OCI-LY7 (cell line): ENCODE measurements at regions of chr19 and their contacts with region 1.

Region 1: DNA sequence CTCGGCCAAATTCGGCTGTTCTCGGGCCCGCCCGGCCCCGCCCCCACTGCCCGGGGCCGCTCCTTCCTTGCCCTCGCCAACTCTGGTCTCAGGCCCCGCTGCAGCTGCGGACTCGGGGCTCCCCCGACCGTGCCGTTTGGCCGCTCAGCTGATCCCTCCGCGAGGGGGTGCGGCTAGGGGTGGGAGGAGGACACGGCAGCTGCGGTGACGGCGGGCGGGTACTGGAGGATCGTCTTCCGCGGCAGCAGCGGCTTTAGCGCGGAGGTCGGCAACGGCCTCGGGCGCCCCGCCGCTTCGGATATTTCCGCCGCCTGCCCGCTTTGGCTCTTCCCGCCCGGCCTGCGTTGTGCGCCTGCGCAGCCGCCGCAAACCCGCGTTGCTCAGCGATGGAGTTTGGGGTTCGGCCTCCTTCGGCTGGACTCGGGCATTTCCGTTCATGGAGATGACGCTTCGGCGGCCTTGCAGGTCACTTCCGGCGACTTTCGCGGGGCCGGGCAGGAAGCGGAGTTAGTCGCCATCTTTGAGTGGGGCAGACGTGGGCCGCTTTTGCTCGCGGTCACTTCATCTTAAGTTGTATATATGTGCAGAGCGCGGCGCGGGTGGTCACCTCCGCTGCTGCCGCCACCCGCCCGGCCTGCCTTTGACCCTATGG is 338 bp upstream of the UBE2M start:
- DNase-seq: peak; percentile 99
- H3K4me3 ChIP-seq: peak overlapping the region; percentile 88
- H3K27ac ChIP-seq: peak overlapping the region; percentile 89
- H3K4me1 ChIP-seq: peaks cover 49% of the 10 kb centered on the region
- CTCF ChIP-seq: no peak

Region 2: DNA sequence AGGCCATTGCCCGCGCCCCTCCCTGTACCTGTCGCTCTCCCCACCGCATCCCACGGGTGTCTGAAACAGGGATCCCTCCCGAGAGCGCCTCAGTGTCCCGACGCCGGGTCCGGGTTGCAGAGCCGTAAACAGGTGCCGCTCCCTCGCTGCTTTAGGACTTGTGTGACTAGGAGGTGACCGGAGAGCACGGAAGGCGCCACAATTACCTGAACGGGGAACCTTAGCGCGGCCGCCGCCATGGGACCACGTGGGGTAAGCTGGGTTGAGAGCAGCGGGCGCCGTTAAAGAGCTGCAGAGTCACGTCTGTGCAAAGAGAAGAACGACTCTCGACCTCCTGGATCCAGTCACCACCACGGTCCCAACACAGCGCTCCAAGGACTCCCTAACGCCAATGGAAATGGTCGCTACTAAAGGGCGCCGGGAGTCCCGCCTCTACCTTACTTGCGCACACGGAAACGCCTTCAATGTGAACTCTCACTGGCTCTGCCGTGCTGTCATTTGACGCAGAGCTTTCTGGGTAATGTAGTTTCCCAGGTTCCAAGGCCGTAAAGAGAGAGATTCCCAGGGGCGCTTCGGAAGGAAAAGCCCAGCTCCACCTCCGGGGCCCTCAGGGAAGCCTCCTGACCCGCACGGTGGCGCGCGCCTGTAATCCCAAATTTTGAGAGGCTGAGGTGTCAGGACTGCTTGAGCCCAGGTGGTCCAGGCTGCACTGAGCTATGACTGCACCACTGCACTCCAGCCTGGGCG is 744.1 kb before region 1 on chr19 and contains the start of gene ZNF552:
- CTCF ChIA-PET with region 1: interaction called, 15 read pairs
- POLR2A ChIA-PET with region 1: no interaction called
- intact Hi-C with region 1: no loop called
- DNase-seq: peak; percentile 88
- H3K4me3 ChIP-seq: peak within 1 kb of the TSS; percentile 96
- H3K27ac ChIP-seq: no peak within 1 kb of the TSS
- H3K4me1 ChIP-seq: peaks cover 28% of the 10 kb centered on the region
- CTCF ChIP-seq: no peak
- total RNA-seq, gene ZNF552: 8.6 and 10.2 TPM in 2 replicates

Region 3: GRCh38 chr19:58499021-58499927 is 59.5 kb before region 1 on chr19:
- CTCF ChIA-PET with region 1: no interaction called
- POLR2A ChIA-PET with region 1: no interaction called
- intact Hi-C with region 1: no loop called
- DNase-seq: peak; percentile 98
- H3K4me3 ChIP-seq: peak overlapping the region; percentile 79
- H3K27ac ChIP-seq: peak overlapping the region; percentile 55
- H3K4me1 ChIP-seq: peaks cover 15% of the 10 kb centered on the region
- CTCF ChIP-seq: peak; percentile 59

Region 4: DNA sequence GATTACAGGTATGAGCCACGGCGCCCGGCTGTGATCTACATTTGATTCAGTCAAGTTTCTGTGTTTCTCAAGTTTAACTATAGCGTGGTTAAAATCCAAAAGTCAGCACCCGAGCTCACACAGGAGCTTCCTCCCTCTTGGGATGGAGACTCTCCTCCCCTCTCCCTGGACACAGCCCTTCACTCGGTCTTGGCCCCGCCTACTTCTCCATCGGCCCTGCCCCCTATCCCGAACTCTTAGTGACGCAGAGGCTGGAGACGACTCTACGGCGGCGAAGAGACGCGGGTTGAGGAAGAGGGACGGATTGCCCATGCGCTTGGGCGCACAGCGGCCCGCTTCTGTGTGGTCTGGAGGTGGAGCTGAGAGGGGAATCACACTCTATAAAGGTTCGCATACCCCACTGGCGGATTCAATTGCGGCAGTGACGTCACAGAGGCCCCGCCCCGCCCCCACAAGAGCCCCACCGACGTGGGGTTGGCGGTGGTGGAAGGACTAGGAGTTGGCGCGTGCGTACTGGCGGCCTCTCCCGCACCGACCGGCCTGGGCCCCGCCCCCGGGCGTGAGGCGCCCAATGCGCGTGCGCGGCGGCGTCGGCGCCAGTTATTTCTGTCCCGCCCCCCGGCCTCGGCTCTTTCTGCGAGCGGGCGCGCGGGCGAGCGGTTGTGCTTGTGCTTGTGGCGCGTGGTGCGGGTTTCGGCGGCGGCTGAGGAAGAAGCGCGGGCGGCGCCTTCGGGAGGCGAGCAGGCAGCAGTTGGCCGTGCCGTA is 14.7 kb before region 1 on chr19 and contains the start of gene TRIM28:
- CTCF ChIA-PET with region 1: interaction called, 4 read pairs
- POLR2A ChIA-PET with region 1: interaction called, 9 read pairs
- intact Hi-C with region 1: loop called (anchors 1 kb)
- DNase-seq: peak; percentile 98
- H3K4me3 ChIP-seq: peak within 1 kb of the TSS; percentile 94
- H3K27ac ChIP-seq: peak within 1 kb of the TSS; percentile 87
- H3K4me1 ChIP-seq: peaks cover 20% of the 10 kb centered on the region
- CTCF ChIP-seq: no peak
- total RNA-seq, gene TRIM28: 551 and 729 TPM in 2 replicates